CD8-positive, alpha-beta memory T cell (primary cell): ENCODE measurements at regions of chr19 and their contacts with region 1.

Region 1: GRCh38 chr19:17183858-17184321 is 31.3 kb upstream of the USE1 start:
- DNase-seq: peak in 2 of 5 donors; percentile 22 to 33
- H3K4me3 ChIP-seq: peak overlapping the region; percentile 70
- H3K4me3 Mint-ChIP-seq: peak overlapping the region; percentile 78 to 91 (median 90)
- H3K27ac ChIP-seq: peak overlapping the region; percentile 58
- H3K27ac Mint-ChIP-seq: peak overlapping the region; percentile 84 to 99 (median 96)
- H3K4me1 ChIP-seq: peaks cover 21% of the 10 kb centered on the region
- H3K4me1 Mint-ChIP-seq: peaks cover 21 to 30% (median 25%) of the 10 kb centered on the region in 3 donors
- H3K27me3 ChIP-seq: no peaks in the 10 kb centered on the region
- H3K27me3 Mint-ChIP-seq: no peaks in the 10 kb centered on the region

Region 2: DNA sequence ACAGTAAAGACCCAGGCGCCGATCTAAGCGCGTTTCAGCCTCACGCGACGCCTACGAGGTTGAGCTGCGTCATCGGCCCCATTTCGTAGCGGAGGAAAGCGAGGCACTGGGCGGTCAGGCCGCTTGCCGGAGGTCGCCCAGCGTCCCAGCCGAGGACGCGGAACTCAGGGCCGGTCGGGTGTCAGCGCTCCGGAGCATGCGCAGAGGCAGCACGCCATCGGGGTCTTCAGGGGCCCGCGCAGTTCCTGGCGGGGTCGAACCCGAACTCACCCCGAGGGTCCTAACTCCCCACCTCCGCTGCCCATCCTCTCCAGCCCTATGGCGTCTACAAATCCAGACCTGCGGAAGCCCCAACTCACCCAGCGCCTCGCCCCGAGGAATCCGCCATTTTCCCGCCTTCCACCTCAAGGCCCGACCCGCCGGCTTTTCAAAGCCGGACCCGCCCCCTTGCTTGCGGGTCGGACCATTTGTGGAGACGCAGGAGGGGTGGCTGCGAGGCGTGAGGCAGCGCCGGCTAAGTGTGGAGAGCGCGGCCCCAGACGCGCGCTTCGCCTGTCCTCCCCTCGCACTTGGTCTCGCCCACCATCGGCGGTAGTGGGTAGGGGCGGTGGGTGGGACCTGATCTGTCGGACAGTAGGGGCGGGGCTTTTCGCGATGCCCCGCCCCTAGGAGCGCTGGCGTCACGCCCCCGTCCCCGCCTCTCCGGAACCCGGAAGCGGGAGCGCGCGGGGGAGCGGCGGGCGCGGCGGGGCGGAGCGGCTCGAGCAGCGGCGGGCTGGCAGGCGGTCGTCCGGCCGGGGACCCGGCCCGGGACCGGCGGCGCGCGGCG is 108.6 kb before region 1 on chr19 and contains the starts of genes HAUS8 and MYO9B:
- CTCF ChIA-PET with region 1: interaction called, 6 read pairs
- POLR2A ChIA-PET with region 1: interaction called, 10 read pairs
- DNase-seq: peak; percentile 100
- H3K4me3 ChIP-seq: peak within 1 kb of the TSS; percentile 86
- H3K4me3 Mint-ChIP-seq: peak within 1 kb of the TSS; percentile 96 to 100 (median 99)
- H3K27ac ChIP-seq: peak within 1 kb of the TSS; percentile 88
- H3K27ac Mint-ChIP-seq: peak within 1 kb of the TSS; percentile 90 to 99 (median 98)
- H3K4me1 ChIP-seq: peaks cover 43% of the 10 kb centered on the region
- H3K4me1 Mint-ChIP-seq: peaks cover 53 to 72% (median 58%) of the 10 kb centered on the region in 3 donors
- H3K27me3 ChIP-seq: no peaks in the 10 kb centered on the region
- H3K27me3 Mint-ChIP-seq: no peaks in the 10 kb centered on the region
- total RNA-seq, gene HAUS8: 33.4 to 36.4 TPM
- total RNA-seq, gene MYO9B: 104 to 108 TPM

Region 3: DNA sequence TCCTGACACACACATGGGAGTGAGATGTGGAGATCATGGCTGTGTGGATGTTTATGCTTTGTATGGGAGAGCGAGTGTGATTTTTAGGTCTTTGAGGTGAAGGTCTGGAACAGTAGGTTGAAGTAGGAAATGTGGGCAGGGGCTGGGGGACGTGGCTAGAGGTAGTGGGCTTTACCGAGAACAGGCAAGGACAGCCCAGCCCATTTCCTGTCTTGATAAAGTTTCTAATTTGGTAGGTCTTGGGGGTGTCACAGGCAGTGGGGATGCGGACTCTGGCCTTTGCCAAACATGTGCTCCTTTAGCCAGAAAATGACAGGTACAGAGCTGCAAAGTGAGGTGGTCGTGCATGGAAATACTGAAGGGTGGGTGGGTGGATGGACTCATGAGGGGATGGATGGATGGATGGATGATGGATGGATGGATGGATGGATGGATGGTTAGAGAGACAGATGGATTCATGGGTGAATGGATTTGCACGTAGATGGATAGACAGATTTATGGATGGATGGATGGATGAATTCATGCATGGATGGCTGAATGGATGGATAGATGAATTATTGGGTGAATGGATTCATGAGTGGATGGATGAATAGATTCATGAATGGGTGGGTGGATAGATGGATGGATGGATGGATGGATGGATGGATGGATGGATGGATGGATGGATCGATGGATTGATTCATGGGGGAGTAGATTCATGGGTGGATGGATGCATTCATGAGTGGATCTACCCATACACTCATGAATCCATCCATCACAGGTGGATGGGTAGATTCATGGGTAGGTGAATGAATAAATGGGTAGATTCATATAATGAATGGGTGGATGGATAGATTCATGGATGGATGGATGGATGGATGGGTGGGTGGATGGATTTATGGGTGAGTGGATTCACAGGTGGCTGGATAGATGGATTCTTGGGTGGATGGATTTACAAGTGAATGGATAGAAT is 38.1 kb before region 1 on chr19:
- CTCF ChIA-PET with region 1: no interaction called
- POLR2A ChIA-PET with region 1: no interaction called
- DNase-seq: no peak
- H3K4me3 ChIP-seq: no peak overlapping the region
- H3K4me3 Mint-ChIP-seq: no peak overlapping the region
- H3K27ac ChIP-seq: no peak overlapping the region
- H3K27ac Mint-ChIP-seq: no peak overlapping the region
- H3K4me1 ChIP-seq: no peaks in the 10 kb centered on the region
- H3K4me1 Mint-ChIP-seq: peaks cover 0 to 12% (median 7%) of the 10 kb centered on the region in 3 donors
- H3K27me3 ChIP-seq: no peaks in the 10 kb centered on the region
- H3K27me3 Mint-ChIP-seq: no peaks in the 10 kb centered on the region

Region 4: GRCh38 chr19:17159466-17160393 is 24.2 kb before region 1 on chr19:
- CTCF ChIA-PET with region 1: no interaction called
- POLR2A ChIA-PET with region 1: no interaction called
- DNase-seq: no peak
- H3K4me3 ChIP-seq: no peak overlapping the region
- H3K4me3 Mint-ChIP-seq: no peak overlapping the region
- H3K27ac ChIP-seq: no peak overlapping the region
- H3K27ac Mint-ChIP-seq: peak overlapping the region in 6 of 8 donors; percentile 9 to 84 (median 56)
- H3K4me1 ChIP-seq: no peaks in the 10 kb centered on the region
- H3K4me1 Mint-ChIP-seq: peaks cover 5 to 12% (median 6%) of the 10 kb centered on the region in 3 donors
- H3K27me3 ChIP-seq: no peaks in the 10 kb centered on the region
- H3K27me3 Mint-ChIP-seq: no peaks in the 10 kb centered on the region

Region 5: GRCh38 chr19:17235618-17236377 is 51.9 kb after region 1 on chr19:
- CTCF ChIA-PET with region 1: interaction called, 10 read pairs
- POLR2A ChIA-PET with region 1: interaction called, 4 read pairs
- DNase-seq: peak; percentile 65 to 84 (median 71)
- H3K4me3 ChIP-seq: peak overlapping the region; percentile 78
- H3K4me3 Mint-ChIP-seq: peak overlapping the region; percentile 63 to 82 (median 73)
- H3K27ac ChIP-seq: peak overlapping the region; percentile 64
- H3K27ac Mint-ChIP-seq: no peak overlapping the region
- H3K4me1 ChIP-seq: peaks cover 15% of the 10 kb centered on the region
- H3K4me1 Mint-ChIP-seq: peaks cover 4 to 7% (median 5%) of the 10 kb centered on the region in 3 donors
- H3K27me3 ChIP-seq: no peaks in the 10 kb centered on the region
- H3K27me3 Mint-ChIP-seq: peaks cover 0 to 3% of the 10 kb centered on the region in 2 donors